ENCODE measurements at regions of chr9 and their contacts with region 1.

Region 1: GRCh38 chr9:87324613-87325194 is 173.0 kb upstream of the DAPK1 start:
- DNase-seq: peak; percentile 85
- H3K4me3 ChIP-seq: no peak overlapping the region
- H3K27ac ChIP-seq: no peak overlapping the region
- H3K4me1 ChIP-seq: peaks cover 16% of the 10 kb centered on the region
- H3K27me3 ChIP-seq: no peaks in the 10 kb centered on the region
- CTCF ChIP-seq: peak; percentile 81

Region 2: GRCh38 chr9:86413966-86414880 is 910.5 kb before region 1 on chr9:
- CTCF ChIA-PET with region 1: no interaction called
- POLR2A ChIA-PET with region 1: no interaction called
- intact Hi-C with region 1: loop called (anchors 1 kb)
- DNase-seq: peak; percentile 74
- H3K4me3 ChIP-seq: no peak overlapping the region
- H3K27ac ChIP-seq: no peak overlapping the region
- H3K4me1 ChIP-seq: no peaks in the 10 kb centered on the region
- H3K27me3 ChIP-seq: no peaks in the 10 kb centered on the region
- CTCF ChIP-seq: peak; percentile 81

Region 3: GRCh38 chr9:86434039-86434726 is 890.5 kb before region 1 on chr9:
- CTCF ChIA-PET with region 1: interaction called, 8 read pairs
- POLR2A ChIA-PET with region 1: no interaction called
- intact Hi-C with region 1: loop called (anchors 2 kb)
- DNase-seq: peak; percentile 84
- H3K4me3 ChIP-seq: peak overlapping the region; percentile 9
- H3K27ac ChIP-seq: peak overlapping the region; percentile 69
- H3K4me1 ChIP-seq: peaks cover 9% of the 10 kb centered on the region
- H3K27me3 ChIP-seq: no peaks in the 10 kb centered on the region
- CTCF ChIP-seq: peak; percentile 92

Region 4: DNA sequence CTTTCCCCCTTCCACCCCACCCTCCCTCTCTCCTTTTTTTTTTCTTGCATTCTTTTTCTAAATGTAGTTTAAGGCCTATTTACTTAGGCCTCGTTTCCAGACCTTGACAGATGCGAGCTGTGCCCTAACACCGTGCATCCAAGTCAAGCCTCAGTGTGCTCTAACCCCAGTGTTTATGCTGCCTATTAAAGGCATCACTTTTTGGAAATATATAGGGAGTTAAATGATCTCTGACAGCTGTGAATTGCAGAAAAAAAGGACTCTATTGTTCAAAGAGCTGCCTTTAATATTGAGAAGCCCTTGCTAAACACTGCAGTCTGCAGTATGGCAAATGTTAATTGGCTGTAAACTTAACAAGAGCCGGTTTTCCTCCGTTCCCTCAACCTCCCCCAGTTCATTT is 700.1 kb before region 1 on chr9:
- CTCF ChIA-PET with region 1: no interaction called
- POLR2A ChIA-PET with region 1: no interaction called
- intact Hi-C with region 1: loop called (anchors 5 kb)
- DNase-seq: no peak
- H3K4me3 ChIP-seq: no peak overlapping the region
- H3K27ac ChIP-seq: peak overlapping the region; percentile 53
- H3K4me1 ChIP-seq: peaks cover 20% of the 10 kb centered on the region
- H3K27me3 ChIP-seq: no peaks in the 10 kb centered on the region
- CTCF ChIP-seq: no peak

Region 5: GRCh38 chr9:86948074-86948929 is 376.4 kb before region 1 on chr9:
- CTCF ChIA-PET with region 1: no interaction called
- POLR2A ChIA-PET with region 1: no interaction called
- intact Hi-C with region 1: loop called (anchors 2 kb)
- DNase-seq: peak; percentile 94
- H3K4me3 ChIP-seq: peak overlapping the region; percentile 84
- H3K27ac ChIP-seq: peak overlapping the region; percentile 71
- H3K4me1 ChIP-seq: peaks cover 22% of the 10 kb centered on the region
- H3K27me3 ChIP-seq: no peaks in the 10 kb centered on the region
- CTCF ChIP-seq: peak; percentile 84

Region 6: DNA sequence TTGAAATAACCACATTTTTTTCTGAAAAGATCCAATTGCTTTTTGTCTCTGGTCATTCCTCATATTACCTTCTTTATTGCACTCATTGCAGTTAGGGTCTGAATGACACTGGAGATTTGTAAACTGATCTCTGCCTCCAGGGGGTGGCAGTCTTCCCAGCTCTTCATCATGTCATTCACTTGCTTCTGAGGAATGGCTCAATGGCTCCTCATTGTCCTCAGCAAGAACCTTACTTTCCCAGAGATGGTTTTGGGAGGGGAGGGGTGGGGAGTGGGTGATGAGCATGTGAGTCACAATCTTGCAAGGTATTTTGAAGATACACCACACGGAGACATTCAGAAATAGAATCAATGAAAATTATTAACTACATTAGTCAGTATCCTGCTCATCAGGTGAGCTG is 217.6 kb before region 1 on chr9:
- CTCF ChIA-PET with region 1: no interaction called
- POLR2A ChIA-PET with region 1: no interaction called
- intact Hi-C with region 1: loop called (anchors 10 kb)
- DNase-seq: peak; percentile 50
- H3K4me3 ChIP-seq: no peak overlapping the region
- H3K27ac ChIP-seq: no peak overlapping the region
- H3K4me1 ChIP-seq: no peaks in the 10 kb centered on the region
- H3K27me3 ChIP-seq: no peaks in the 10 kb centered on the region
- CTCF ChIP-seq: peak; percentile 61

Region 7: GRCh38 chr9:87179573-87180340 is 144.9 kb before region 1 on chr9:
- CTCF ChIA-PET with region 1: no interaction called
- POLR2A ChIA-PET with region 1: no interaction called
- intact Hi-C with region 1: no loop called
- DNase-seq: peak; percentile 25
- H3K4me3 ChIP-seq: no peak overlapping the region
- H3K27ac ChIP-seq: no peak overlapping the region
- H3K4me1 ChIP-seq: no peaks in the 10 kb centered on the region
- H3K27me3 ChIP-seq: no peaks in the 10 kb centered on the region
- CTCF ChIP-seq: no peak

Region 8: GRCh38 chr9:87516222-87516925 is 191.7 kb after region 1 on chr9:
- CTCF ChIA-PET with region 1: no interaction called
- POLR2A ChIA-PET with region 1: no interaction called
- intact Hi-C with region 1: no loop called
- DNase-seq: peak; percentile 83
- H3K4me3 ChIP-seq: no peak overlapping the region
- H3K27ac ChIP-seq: peak overlapping the region; percentile 89
- H3K4me1 ChIP-seq: peaks cover 90% of the 10 kb centered on the region
- H3K27me3 ChIP-seq: no peaks in the 10 kb centered on the region
- CTCF ChIP-seq: no peak

Measured in A673 (cell line).